ENCODE measurements at regions of chr10 and their contacts with region 1.

Region 1: DNA sequence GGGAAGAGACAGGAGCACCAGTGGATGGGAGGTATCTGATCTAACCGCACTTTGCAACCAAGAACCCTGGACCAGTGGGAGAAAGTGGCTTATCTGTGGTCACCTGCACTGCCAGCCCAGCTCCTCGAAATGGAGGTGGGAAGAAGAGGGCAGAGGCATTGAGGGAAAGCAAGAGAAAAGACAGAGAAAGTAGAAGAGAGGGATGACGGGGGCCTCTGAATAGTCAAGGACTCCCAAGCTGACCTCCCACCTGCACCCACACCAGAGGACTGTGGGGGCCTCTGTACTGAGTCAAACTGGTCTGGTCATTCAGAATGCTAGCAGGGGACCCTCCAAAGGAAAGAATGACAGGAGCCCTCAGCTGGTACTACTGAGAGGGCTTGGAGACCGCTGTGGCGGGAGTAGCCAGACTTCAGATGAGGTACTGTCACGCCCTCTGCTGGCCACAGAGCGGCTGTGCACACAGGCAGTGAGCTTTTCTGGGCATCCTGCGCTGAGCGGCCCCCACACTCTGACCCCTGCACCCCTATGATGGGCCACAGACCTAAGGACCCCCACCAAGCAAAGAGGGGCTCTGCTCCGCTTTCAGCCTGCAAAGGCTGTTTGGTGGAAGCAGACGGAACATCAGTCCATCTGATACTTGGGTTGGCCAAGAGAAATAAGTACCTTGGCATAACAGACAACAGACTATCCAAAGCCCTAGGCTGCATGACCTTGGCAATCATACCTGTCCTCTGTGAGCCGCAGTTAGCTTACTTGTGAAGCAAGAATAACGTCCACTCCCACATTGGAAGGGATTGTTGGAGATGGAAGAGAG is 112.9 kb downstream of the COL13A1 start:
- DNase-seq: peak; percentile 58
- H3K4me3 ChIP-seq: no peak overlapping the region
- H3K27ac ChIP-seq: no peak overlapping the region
- H3K4me1 ChIP-seq: peaks cover 17% of the 10 kb centered on the region
- H3K27me3 ChIP-seq: no peaks in the 10 kb centered on the region
- CTCF ChIP-seq: peak; percentile 93 to 96
- POLR2A ChIP-seq: no peak

Region 2: GRCh38 chr10:69742928-69743602 is 171.5 kb before region 1 on chr10:
- CTCF ChIA-PET with region 1: interaction called, 39 read pairs
- POLR2A ChIA-PET with region 1: no interaction called
- dilution Hi-C with region 1: no loop called
- intact Hi-C with region 1: loop called (anchors 1 kb)
- DNase-seq: peak; percentile 29
- H3K4me3 ChIP-seq: no peak overlapping the region
- H3K27ac ChIP-seq: no peak overlapping the region
- H3K4me1 ChIP-seq: no peaks in the 10 kb centered on the region
- H3K27me3 ChIP-seq: peaks cover 14% of the 10 kb centered on the region in 2 experiments
- CTCF ChIP-seq: peak; percentile 58 to 64
- POLR2A ChIP-seq: no peak

Region 3: GRCh38 chr10:69800109-69800508 is 114.5 kb before region 1 on chr10:
- CTCF ChIA-PET with region 1: interaction called, 622 read pairs
- POLR2A ChIA-PET with region 1: no interaction called
- dilution Hi-C with region 1: no loop called
- intact Hi-C with region 1: loop called (anchors 1 kb)
- DNase-seq: peak; percentile 56
- H3K4me3 ChIP-seq: no peak overlapping the region
- H3K27ac ChIP-seq: no peak overlapping the region
- H3K4me1 ChIP-seq: peaks cover 20% of the 10 kb centered on the region
- H3K27me3 ChIP-seq: peaks cover 13 to 23% of the 10 kb centered on the region in 2 experiments
- CTCF ChIP-seq: peak; percentile 77 to 79
- POLR2A ChIP-seq: no peak

Region 4: GRCh38 chr10:69839696-69840345 is 74.8 kb before region 1 on chr10:
- CTCF ChIA-PET with region 1: interaction called, 13 read pairs
- POLR2A ChIA-PET with region 1: no interaction called
- dilution Hi-C with region 1: no loop called
- intact Hi-C with region 1: no loop called
- DNase-seq: no peak
- H3K4me3 ChIP-seq: no peak overlapping the region
- H3K27ac ChIP-seq: peak overlapping the region; percentile 6
- H3K4me1 ChIP-seq: peaks cover 43% of the 10 kb centered on the region
- H3K27me3 ChIP-seq: no peaks in the 10 kb centered on the region
- CTCF ChIP-seq: no peak
- POLR2A ChIP-seq: no peak

Region 5: DNA sequence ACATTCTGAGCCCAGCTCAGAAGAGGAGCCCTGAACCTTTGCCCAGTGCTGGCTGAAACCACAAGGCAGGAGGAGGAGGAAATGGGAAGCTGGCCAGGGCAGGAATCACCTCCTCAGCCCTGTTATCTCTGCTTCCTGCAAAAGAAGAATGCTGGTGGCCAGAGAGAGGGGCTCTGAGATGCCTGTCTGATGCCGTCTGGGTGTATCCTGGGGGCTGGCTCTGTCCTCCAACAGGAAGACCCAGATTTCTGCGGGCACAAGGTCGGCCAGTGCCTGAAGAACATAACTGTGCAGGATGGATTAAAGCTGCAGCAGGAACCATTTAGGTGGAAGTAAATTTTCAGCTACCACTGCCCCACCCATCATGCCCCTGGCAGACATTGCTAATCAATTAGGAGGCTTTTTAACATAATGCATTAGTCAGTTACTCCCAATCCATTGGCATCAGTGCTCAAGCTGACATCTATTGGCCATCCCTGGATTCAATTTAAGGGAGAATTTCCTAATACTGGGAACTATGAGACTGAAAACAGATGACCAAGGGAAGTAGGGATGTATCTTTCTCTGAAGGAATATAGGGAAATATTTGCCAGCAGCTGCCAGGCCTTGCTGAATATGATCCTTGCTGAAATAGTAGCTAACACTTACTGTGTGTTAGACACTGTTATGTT is 45.2 kb before region 1 on chr10:
- CTCF ChIA-PET with region 1: interaction called, 25 read pairs
- POLR2A ChIA-PET with region 1: interaction called, 3 read pairs
- dilution Hi-C with region 1: no loop called
- intact Hi-C with region 1: no loop called
- DNase-seq: peak; percentile 46
- H3K4me3 ChIP-seq: no peak overlapping the region
- H3K27ac ChIP-seq: peak overlapping the region; percentile 39
- H3K4me1 ChIP-seq: peaks cover 66% of the 10 kb centered on the region
- H3K27me3 ChIP-seq: no peaks in the 10 kb centered on the region
- CTCF ChIP-seq: no peak
- POLR2A ChIP-seq: no peak

Region 6: DNA sequence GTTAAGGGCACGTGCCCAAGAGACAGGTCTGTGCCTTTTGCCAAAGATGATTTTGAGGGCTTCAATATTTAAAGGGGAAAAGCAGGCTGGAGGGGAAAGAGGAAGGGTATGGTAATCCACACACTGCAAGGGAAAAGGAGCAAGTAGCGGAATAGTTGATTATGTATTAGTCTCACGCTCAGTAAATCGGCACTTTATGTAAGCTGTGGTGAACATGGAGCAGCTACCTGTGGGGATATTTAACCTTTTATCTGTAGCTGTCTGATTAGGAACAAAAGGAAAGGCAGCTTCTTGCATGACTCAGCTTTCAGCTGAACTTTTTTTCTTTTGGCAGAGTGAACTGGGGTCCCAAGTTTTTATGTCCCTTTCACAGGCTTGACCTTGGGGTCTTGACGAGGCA is 10.5 kb after region 1 on chr10:
- CTCF ChIA-PET with region 1: interaction called, 18 read pairs
- POLR2A ChIA-PET with region 1: no interaction called
- dilution Hi-C with region 1: no loop called
- intact Hi-C with region 1: no loop called
- DNase-seq: no peak
- H3K4me3 ChIP-seq: no peak overlapping the region
- H3K27ac ChIP-seq: no peak overlapping the region
- H3K4me1 ChIP-seq: no peaks in the 10 kb centered on the region
- H3K27me3 ChIP-seq: no peaks in the 10 kb centered on the region
- CTCF ChIP-seq: no peak
- POLR2A ChIP-seq: no peak

Measured in endothelial cell of umbilical vein (primary cell).